Testis (tissue), 5 donors: ENCODE measurements at regions of chr7 and their contacts with region 1.

Region 1: GRCh38 chr7:72042855-72043254 is 369.3 kb downstream of the CALN1 start:
- DNase-seq: no peak
- H3K4me3 ChIP-seq: no peak overlapping the region
- H3K27ac ChIP-seq: no peak overlapping the region
- H3K4me1 ChIP-seq: no peaks in the 10 kb centered on the region
- H3K27me3 ChIP-seq: no peaks in the 10 kb centered on the region
- CTCF ChIP-seq: no peak
- POLR2A ChIP-seq: no peak

Region 2: GRCh38 chr7:71770269-71770907 is 272.5 kb before region 1 on chr7:
- intact Hi-C with region 1: no loop called
- DNase-seq: no peak
- H3K4me3 ChIP-seq: no peak overlapping the region
- H3K27ac ChIP-seq: no peak overlapping the region
- H3K4me1 ChIP-seq: peaks cover 3% of the 10 kb centered on the region
- H3K27me3 ChIP-seq: no peaks in the 10 kb centered on the region
- CTCF ChIP-seq: no peak
- POLR2A ChIP-seq: no peak

Region 3: GRCh38 chr7:72213081-72213581 is 170.3 kb after region 1 on chr7:
- intact Hi-C with region 1: loop called (anchors 10 kb)
- DNase-seq: no peak
- H3K4me3 ChIP-seq: no peak overlapping the region
- H3K27ac ChIP-seq: no peak overlapping the region
- H3K4me1 ChIP-seq: no peaks in the 10 kb centered on the region
- H3K27me3 ChIP-seq: no peaks in the 10 kb centered on the region
- CTCF ChIP-seq: no peak
- POLR2A ChIP-seq: no peak